ENCODE measurements at regions of chr3 and their contacts with region 1.

Region 1: DNA sequence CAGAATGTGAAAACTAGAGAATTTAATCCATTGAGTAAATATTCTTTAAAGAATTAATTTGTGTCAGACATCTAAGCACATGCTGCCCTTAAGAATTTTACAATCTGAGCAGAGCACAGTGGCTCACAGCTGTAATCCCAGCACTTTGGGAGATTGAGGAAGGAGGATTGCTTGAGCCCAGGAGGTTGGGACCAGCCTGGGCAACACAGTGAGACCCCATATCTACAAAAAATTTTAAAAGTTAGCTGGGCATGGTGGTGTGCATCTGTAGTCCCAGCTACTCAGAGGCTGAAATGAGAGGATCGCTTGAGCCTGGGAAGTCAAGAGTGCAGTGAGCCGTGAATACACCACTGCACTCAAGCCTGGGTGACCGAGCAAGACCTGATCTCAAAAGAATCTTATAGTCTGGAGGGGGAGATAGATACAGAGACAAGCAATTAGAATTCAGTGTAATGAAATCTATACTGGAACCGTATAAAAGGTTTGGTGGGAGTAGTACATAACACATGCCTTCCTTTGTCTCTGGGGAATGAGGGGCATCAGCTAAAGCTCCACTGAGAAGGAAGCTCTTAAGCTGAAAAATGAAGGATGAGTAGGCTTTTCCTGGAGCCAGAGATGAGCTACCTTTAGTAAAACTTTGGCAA is 21.2 kb downstream of the ATP11B start:
- DNase-seq: no peak
- H3K4me3 ChIP-seq: no peak overlapping the region
- H3K27ac ChIP-seq: no peak overlapping the region
- H3K4me1 ChIP-seq: no peaks in the 10 kb centered on the region
- H3K27me3 ChIP-seq: no peaks in the 10 kb centered on the region
- CTCF ChIP-seq: no peak
- EP300 ChIP-seq: no peak
- POLR2A ChIP-seq: no peak

Region 2: GRCh38 chr3:182792901-182793662 is 21.5 kb before region 1 on chr3 and contains the start of gene ATP11B:
- intact Hi-C with region 1: loop called in 1 of 4 experiments (anchors 2 kb)
- DNase-seq: peak; percentile 62 to 83 (median 81)
- H3K4me3 ChIP-seq: peak within 1 kb of the TSS; percentile 93
- H3K27ac ChIP-seq: peak within 1 kb of the TSS; percentile 66 to 87
- H3K4me1 ChIP-seq: peaks cover 2% of the 10 kb centered on the region
- H3K27me3 ChIP-seq: no peaks in the 10 kb centered on the region
- CTCF ChIP-seq: no peak
- EP300 ChIP-seq: no peak
- POLR2A ChIP-seq: peak; percentile 43
- total RNA-seq, gene ATP11B: 43.0 to 83.4 (median 56.2) TPM

Region 3: GRCh38 chr3:183006396-183007002 is 192.0 kb after region 1 on chr3:
- intact Hi-C with region 1: no loop called
- DNase-seq: no peak
- H3K4me3 ChIP-seq: no peak overlapping the region
- H3K27ac ChIP-seq: no peak overlapping the region
- H3K4me1 ChIP-seq: no peaks in the 10 kb centered on the region
- H3K27me3 ChIP-seq: no peaks in the 10 kb centered on the region
- CTCF ChIP-seq: no peak
- EP300 ChIP-seq: no peak
- POLR2A ChIP-seq: no peak